Uterus (tissue), 4 donors: ENCODE measurements at regions of chr1 and their contacts with region 1.

Region 1: DNA sequence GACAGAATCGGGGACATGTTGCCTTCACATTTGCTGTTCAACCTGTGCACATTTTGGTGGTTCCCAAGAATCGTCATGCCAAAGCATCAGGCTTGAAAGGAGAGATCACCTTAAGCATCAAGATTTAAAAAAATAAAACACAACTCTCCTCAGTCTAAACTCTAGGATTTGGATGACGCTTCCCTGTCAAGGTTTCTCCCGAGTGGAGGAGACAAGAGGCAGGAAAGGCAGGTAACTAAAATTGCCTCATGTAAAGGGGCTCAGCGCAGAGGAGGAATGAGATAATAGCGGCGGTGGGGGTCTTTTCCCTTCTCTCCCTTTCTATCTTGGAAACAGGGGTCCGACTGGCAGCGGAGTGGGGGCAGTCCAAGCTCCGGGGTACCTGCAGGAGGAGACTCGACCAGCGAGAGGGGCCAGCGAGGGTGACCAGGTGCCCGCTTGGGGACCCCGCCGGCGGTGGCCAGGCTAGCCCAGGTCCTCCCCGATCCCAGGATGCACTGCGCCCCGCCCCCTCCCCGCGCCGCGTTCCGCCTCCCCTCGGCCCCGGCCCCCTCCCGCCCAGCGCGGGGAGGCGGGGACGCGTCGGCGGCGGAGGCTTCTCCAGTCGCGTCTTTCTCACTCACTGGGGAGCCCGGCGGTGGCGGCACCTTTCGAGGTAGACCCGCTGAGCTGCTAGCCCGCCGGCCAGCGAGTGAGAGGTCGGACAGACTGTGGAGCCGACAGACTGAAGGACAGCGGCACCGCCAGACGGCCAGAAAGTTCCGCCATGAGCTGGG is at the start of gene FNBP1L:
- DNase-seq: peak; percentile 72 to 74
- H3K4me3 ChIP-seq: peak within 1 kb of the TSS; percentile 82 to 97
- H3K27ac ChIP-seq: peak within 1 kb of the TSS; percentile 76 to 80
- H3K4me1 ChIP-seq: no peaks in the 10 kb centered on the region
- H3K27me3 ChIP-seq: no peaks in the 10 kb centered on the region
- CTCF ChIP-seq: no peak
- POLR2A ChIP-seq: peak; percentile 36 to 70
- total RNA-seq, gene FNBP1L: 14.9 to 88.1 (median 23.0) TPM

Region 2: GRCh38 chr1:93615582-93616150 is 168.0 kb after region 1 on chr1:
- intact Hi-C with region 1: loop called (anchors 10 kb)
- DNase-seq: no peak
- H3K4me3 ChIP-seq: no peak overlapping the region
- H3K27ac ChIP-seq: peak overlapping the region; percentile 64 to 65
- H3K4me1 ChIP-seq: peaks cover 0 to 14% of the 10 kb centered on the region in 2 donors
- H3K27me3 ChIP-seq: no peaks in the 10 kb centered on the region
- CTCF ChIP-seq: no peak
- POLR2A ChIP-seq: no peak

Region 3: DNA sequence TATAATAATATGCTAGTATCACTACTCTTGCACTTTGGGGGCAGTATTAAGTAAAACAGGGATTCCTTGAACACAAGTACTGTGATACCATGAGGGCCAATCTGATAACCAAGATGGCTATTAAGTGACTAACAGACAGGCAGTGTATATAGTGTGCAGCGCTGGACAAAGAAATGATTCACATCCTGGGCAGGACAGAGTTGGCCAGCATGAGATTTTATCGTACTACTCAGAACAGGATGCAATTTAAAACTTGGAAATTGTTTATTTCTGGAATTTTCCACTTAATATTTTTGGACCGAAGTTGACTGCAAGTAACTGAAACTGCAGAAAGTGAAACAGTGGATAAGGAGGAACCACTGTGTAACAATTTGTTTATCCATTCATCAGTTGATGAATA is 356.7 kb after region 1 on chr1:
- intact Hi-C with region 1: no loop called
- DNase-seq: no peak
- H3K4me3 ChIP-seq: no peak overlapping the region
- H3K27ac ChIP-seq: peak overlapping the region in 1 of 2 donors; percentile 10
- H3K4me1 ChIP-seq: no peaks in the 10 kb centered on the region
- H3K27me3 ChIP-seq: no peaks in the 10 kb centered on the region
- CTCF ChIP-seq: no peak
- POLR2A ChIP-seq: no peak

Region 4: DNA sequence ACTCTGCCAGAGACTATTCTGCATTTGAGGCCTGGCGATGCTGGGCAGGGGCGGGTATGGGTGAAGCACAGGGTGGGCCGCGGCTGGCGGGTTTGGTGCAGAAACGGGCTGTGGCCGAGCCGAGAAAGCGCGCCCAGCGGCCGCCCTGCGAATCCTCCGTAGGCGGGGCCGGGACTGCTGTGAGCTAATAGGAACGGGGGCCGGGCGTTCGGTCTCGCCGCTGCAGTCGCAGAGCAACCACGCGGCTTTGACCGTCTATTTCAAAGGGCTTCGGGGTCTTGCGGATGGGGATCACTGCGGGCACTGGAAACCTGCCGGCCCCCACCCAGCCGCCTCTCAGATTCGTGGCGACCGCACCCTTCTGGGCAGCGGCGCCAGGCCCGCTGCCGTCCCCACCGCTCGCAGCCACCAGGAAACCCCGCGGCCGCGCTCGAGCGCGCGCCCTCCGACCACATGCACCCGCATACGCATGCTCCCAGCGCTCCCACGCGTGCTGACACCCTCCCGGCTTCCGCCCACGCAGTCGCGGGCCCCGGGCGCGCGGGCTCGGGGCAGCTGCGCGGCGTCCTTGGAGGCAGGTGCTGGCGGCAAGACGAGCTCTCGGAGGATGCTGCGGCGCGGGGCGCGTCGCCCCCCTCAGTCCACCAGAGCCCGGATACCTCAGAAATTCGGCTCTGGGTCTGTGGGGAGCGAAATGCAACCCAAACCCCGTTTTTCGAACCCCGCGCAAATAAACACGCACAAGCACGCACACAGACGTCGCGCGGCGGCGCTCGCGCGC is 398.7 kb after region 1 on chr1:
- intact Hi-C with region 1: loop called (anchors 5 kb)
- DNase-seq: peak; percentile 86 to 88
- H3K4me3 ChIP-seq: peak overlapping the region; percentile 76 to 80
- H3K27ac ChIP-seq: peak overlapping the region; percentile 97
- H3K4me1 ChIP-seq: peaks cover 0 to 5% of the 10 kb centered on the region in 2 donors
- H3K27me3 ChIP-seq: no peaks in the 10 kb centered on the region
- CTCF ChIP-seq: peak; percentile 14 to 48 (median 40)
- POLR2A ChIP-seq: peak in 1 of 2 donors; percentile 66